ENCODE measurements at regions of chr15 and their contacts with region 1.

Region 1: DNA sequence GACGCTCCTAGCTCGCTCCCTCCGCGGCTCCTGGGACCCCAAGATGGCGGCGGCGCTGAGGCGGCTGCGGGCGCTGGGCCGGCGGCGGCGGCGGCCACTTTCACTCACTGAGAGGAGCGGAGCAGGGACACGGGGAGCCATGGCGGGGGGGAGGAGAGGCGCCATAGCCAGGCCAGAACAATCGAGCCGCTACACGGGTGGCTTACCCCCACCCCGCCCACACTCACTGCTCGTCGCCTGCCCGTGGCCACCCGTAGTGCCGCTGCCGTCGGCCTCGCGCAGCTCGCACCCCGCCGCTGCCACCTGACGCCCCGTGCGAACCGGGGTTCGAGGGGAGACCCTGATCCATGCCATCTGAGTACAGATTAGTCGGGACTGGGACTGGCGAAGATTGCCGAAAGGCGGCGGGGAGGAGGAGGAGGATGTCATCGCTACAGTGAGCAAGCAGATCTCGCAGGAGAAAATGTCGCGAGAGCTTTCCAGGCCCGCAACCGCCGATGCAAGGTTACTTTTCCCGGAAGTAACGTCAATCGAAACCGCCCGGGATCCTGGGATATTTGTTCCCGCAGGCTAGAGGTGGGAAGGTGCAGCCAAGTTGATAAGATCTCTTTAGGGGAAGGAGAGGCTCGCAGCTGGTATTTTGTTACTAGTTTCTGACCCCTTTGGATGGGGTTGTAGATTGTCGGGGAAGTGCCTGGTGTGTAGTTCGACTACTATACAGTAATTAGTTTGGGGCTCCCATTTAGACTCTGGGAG is at the start of gene INO80:
- DNase-seq: peak; percentile 98
- ATAC-seq: peak; percentile 85
- H3K4me3 Mint-ChIP-seq: peak within 1 kb of the TSS; percentile 83
- H3K27ac Mint-ChIP-seq: peak within 1 kb of the TSS; percentile 100
- H3K4me1 Mint-ChIP-seq: peaks cover 18% of the 10 kb centered on the region
- H3K27me3 Mint-ChIP-seq: no peaks in the 10 kb centered on the region
- CTCF ChIP-seq: no peak
- total RNA-seq, gene INO80: 19.1 to 20.2 TPM

Region 2: GRCh38 chr15:41073028-41073427 is 43.3 kb before region 1 on chr15:
- CTCF ChIA-PET with region 1: no interaction called
- POLR2A ChIA-PET with region 1: no interaction called
- intact Hi-C with region 1: no loop called
- DNase-seq: no peak
- ATAC-seq: no peak
- H3K4me3 Mint-ChIP-seq: no peak overlapping the region
- H3K27ac Mint-ChIP-seq: no peak overlapping the region
- H3K4me1 Mint-ChIP-seq: no peaks in the 10 kb centered on the region
- H3K27me3 Mint-ChIP-seq: no peaks in the 10 kb centered on the region
- CTCF ChIP-seq: no peak

Region 3: GRCh38 chr15:41230650-41231533 is 114.6 kb after region 1 on chr15 and contains the starts of genes CHP1 and EXD1:
- CTCF ChIA-PET with region 1: no interaction called
- POLR2A ChIA-PET with region 1: no interaction called
- intact Hi-C with region 1: loop called (anchors 5 kb)
- DNase-seq: peak; percentile 99
- ATAC-seq: peak; percentile 98
- H3K4me3 Mint-ChIP-seq: peak within 1 kb of the TSS; percentile 88
- H3K27ac Mint-ChIP-seq: peak within 1 kb of the TSS; percentile 93
- H3K4me1 Mint-ChIP-seq: peaks cover 27% of the 10 kb centered on the region
- H3K27me3 Mint-ChIP-seq: no peaks in the 10 kb centered on the region
- CTCF ChIP-seq: peak; percentile 100
- total RNA-seq, gene CHP1: 31.6 to 34.7 TPM
- total RNA-seq, gene EXD1: not detected

Measured in activated CD8-positive, alpha-beta T cell treated with anti-CD3 and anti-CD28 coated beads for 36 hours (primary cell).